Kidney (tissue), 22 donors: ENCODE measurements at regions of chr4 and their contacts with region 1.

Region 1: DNA sequence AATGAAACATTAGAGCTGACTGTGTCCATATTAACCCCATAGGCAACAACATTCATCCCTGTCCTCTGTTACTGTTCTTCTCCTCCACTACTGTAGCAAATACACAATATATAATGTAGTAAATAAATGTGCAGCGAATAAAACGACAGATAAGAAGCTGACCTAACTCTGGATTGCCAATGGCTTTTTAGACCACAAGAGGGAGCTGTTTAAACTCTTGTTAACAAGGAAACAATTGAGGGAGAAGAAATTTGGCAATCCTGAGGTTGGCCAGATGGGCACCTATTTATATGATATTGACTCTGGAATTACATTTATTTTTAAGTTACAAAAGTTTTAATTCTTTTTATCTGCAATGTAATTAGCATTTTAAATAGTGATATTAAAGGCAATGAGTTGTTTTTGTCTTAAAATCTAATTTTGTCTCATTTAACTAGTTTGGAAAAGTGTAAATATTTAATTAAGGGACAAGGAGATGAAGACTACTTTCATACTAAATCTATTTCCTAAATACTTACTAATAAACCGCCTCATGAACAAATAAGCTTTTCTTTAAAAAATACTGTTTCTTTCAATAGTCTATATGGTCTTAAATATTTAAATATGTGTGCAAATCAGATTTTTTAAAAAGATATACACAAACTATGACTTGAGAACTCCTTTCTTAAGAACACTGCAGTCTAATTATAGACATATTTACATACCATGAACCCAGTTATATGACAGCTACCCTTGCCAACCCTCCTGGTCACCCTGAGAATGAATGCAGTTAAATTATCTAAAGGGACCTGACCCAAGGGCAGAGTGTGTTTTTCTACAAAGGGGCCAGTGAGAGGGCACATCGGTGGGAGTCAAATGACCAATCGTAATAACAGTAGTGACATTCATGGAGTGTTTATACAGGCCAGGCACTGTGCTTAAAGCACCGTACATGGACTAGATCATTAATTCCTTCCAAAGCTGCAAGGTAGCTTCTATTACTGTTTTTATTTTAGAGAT is 52.9 kb upstream of the HPF1 start:
- DNase-seq: peak in 3 of 5 donors; percentile 25 to 91 (median 85)
- H3K4me3 ChIP-seq: no peak overlapping the region
- H3K27ac ChIP-seq: no peak overlapping the region
- H3K4me1 ChIP-seq: no peaks in the 10 kb centered on the region
- H3K27me3 ChIP-seq: no peaks in the 10 kb centered on the region
- CTCF ChIP-seq: peak; percentile 81

Region 2: DNA sequence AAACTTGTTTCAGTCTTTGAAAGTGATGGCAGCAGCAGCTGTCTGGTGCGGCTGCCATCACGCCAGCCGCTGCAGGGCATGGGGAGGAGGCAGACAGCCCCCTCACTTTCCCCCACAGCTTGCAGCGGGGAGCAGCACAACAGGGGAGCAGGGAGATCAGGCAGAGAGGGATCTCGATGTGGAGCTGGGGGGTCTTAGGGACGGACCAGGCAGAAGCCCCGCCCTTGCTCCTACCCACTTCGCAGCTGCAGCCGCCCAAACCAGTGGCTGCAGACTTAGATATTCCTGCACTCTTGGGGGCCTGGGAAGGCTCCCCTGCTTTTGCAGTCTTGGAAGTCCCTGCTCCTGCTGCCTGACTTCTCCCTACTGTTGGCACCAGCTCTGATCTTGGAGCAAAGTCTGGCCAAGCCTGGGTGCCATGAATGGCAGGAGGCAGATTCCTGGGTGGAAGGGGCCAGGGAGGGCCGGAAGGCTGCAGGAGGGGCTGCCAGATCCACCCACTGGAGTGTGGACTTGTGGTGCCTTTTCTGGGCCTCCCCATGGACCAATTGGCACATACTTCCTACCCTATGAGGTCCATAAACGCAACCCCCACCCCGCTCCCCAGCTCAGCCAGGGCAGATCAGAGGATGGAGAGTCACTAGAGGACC is 229.5 kb after region 1 on chr4:
- intact Hi-C with region 1: loop called (anchors 5 kb)
- DNase-seq: no peak
- H3K4me3 ChIP-seq: no peak overlapping the region
- H3K27ac ChIP-seq: no peak overlapping the region
- H3K4me1 ChIP-seq: no peaks in the 10 kb centered on the region
- H3K27me3 ChIP-seq: no peaks in the 10 kb centered on the region
- CTCF ChIP-seq: no peak